HepG2 (cell line): ENCODE measurements at regions of chr22 and their contacts with region 1.

Region 1: GRCh38 chr22:19607192-19608002 is 83.2 kb upstream of the CLDN5 start:
- DNase-seq: no peak
- ATAC-seq: peak; percentile 20; the same call in 2 of the 3 replicates
- H3K4me3 ChIP-seq: no peak overlapping the region
- H3K27ac ChIP-seq: no peak overlapping the region
- H3K4me1 ChIP-seq: peaks cover 33% of the 10 kb centered on the region
- H3K27me3 ChIP-seq: peaks cover 4 to 50% of the 10 kb centered on the region in 2 experiments
- CTCF ChIP-seq: no peak
- EP300 ChIP-seq: no peak
- POLR2A ChIP-seq: no peak
- RAD21 ChIP-seq: no peak

Region 2: DNA sequence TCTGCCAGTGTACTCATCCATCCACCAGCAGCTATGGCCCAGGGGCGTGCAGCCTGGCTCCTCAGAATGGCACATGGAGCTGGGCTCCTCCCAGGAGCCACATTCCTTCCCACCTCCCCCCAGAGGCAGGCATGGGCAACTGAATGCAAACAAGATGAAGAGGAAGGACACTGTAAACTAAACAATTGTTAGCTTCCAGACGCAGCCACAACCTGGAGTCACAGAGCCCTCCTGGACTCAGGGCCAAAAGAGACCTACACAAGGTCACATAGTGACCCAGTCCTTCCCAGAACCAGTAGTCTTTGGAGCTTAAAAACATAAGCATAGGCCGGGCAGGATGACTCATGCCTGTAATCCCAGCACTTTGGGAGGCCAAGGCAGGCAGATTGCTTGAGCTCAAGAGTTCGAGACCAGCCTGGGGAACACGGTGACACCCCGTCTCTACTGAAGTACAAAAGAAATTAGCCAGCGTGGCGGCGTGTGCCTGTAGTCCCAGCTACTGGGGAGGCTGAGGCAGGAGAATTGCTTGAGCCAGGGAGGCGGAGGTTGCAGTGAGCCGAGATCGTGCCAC is 52.5 kb before region 1 on chr22:
- CTCF ChIA-PET with region 1: no interaction called
- POLR2A ChIA-PET with region 1: no interaction called
- in situ Hi-C with region 1: no loop called
- intact Hi-C with region 1: loop called (anchors 10 kb)
- DNase-seq: peak; percentile 81
- ATAC-seq: peak; percentile 97
- H3K4me3 ChIP-seq: no peak overlapping the region
- H3K27ac ChIP-seq: no peak overlapping the region
- H3K4me1 ChIP-seq: peaks cover 17% of the 10 kb centered on the region
- H3K27me3 ChIP-seq: peaks cover 0 to 22% of the 10 kb centered on the region in 2 experiments; a peak in 3 of 5 replicates
- CTCF ChIP-seq: peak; percentile 47
- EP300 ChIP-seq: no peak
- POLR2A ChIP-seq: no peak
- RAD21 ChIP-seq: peak; percentile 47; the same call in 1 of the 2 replicates

Region 3: GRCh38 chr22:19756288-19757128 is 149.1 kb after region 1 on chr22:
- CTCF ChIA-PET with region 1: no interaction called
- POLR2A ChIA-PET with region 1: no interaction called
- in situ Hi-C with region 1: no loop called
- intact Hi-C with region 1: no loop called
- DNase-seq: peak; percentile 35
- ATAC-seq: peak; percentile 64
- H3K4me3 ChIP-seq: peak overlapping the region; percentile 26 to 58 (median 36); a peak in 3 of 6 replicates
- H3K27ac ChIP-seq: no peak overlapping the region
- H3K4me1 ChIP-seq: peaks cover 23% of the 10 kb centered on the region
- H3K27me3 ChIP-seq: peaks cover 12 to 89% of the 10 kb centered on the region in 2 experiments
- CTCF ChIP-seq: peak; percentile 84
- EP300 ChIP-seq: no peak
- POLR2A ChIP-seq: no peak
- RAD21 ChIP-seq: peak; percentile 66; the same call in 1 of the 2 replicates